ENCODE measurements at regions of chr14 and their contacts with region 1.

Region 1: GRCh38 chr14:52272375-52272774 is 4.9 kb downstream of the PTGDR start:
- DNase-seq: peak in 1 of 2 donors; percentile 73
- ATAC-seq: peak; percentile 46 to 64 (median 55)
- H3K4me3 ChIP-seq: peak overlapping the region; percentile 89
- H3K4me3 Mint-ChIP-seq: peak overlapping the region; percentile 99
- H3K27ac ChIP-seq: peak overlapping the region; percentile 71
- H3K27ac Mint-ChIP-seq: peak overlapping the region; percentile 95 to 100
- H3K4me1 ChIP-seq: peaks cover 26% of the 10 kb centered on the region
- H3K4me1 Mint-ChIP-seq: peaks cover 66 to 82% of the 10 kb centered on the region in 2 donors
- H3K27me3 ChIP-seq: no peaks in the 10 kb centered on the region
- H3K27me3 Mint-ChIP-seq: no peaks in the 10 kb centered on the region
- CTCF ChIP-seq: peak; percentile 70

Region 2: GRCh38 chr14:51989293-51990234 is 282.8 kb before region 1 on chr14 and contains the start of gene RTRAF:
- intact Hi-C with region 1: loop called (anchors 1 kb)
- DNase-seq: peak; percentile 91 to 97
- ATAC-seq: peak; percentile 97 to 98 (median 98)
- H3K4me3 ChIP-seq: peak within 1 kb of the TSS; percentile 58
- H3K4me3 Mint-ChIP-seq: peak within 1 kb of the TSS; percentile 93
- H3K27ac ChIP-seq: peak within 1 kb of the TSS; percentile 83
- H3K27ac Mint-ChIP-seq: peak within 1 kb of the TSS; percentile 90 to 91
- H3K4me1 ChIP-seq: peaks cover 7% of the 10 kb centered on the region
- H3K4me1 Mint-ChIP-seq: peaks cover 15% of the 10 kb centered on the region in 2 donors
- H3K27me3 ChIP-seq: no peaks in the 10 kb centered on the region
- H3K27me3 Mint-ChIP-seq: no peaks in the 10 kb centered on the region
- CTCF ChIP-seq: no peak
- total RNA-seq, gene RTRAF: 84.3 to 96.5 (median 92.7) TPM

Region 3: DNA sequence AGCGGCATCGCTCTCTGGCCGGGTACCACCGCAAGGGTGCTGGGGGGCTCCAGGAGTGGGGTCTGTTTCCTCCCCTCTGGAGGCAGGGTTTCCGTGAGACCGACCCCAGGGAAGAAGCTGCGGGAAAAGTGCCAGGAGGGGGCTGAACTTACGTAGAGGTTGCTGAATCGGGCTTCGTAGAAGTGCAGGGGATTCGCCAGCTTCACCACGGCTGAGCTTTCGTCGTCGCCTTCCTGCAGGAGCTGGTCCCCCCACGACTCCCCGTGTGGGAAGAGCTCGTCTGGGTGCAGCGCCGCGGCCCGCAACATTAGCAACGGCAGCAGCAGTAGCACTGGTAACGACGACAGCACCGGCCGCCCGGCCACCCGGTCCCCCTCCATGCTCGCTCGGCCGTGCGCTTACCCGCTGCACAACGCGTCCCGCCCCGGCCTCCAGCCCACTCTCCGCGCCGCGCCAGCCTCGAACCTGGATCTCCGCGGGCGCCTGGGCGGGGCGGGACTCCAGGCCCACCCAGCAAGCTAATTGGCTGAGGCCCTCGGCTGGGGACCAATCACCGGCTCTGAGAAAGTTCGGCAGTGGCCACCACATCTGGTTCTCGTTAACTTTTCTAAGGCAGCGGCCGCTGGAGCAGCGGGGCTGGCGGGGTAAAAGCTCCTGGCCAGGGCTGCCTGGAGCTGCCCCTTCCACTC is 203.6 kb before region 1 on chr14 and contains the start of gene NID2:
- intact Hi-C with region 1: loop called (anchors 2 kb)
- DNase-seq: peak; percentile 49 to 60
- ATAC-seq: peak; percentile 71 to 80 (median 78)
- H3K4me3 ChIP-seq: peak within 1 kb of the TSS; percentile 47
- H3K4me3 Mint-ChIP-seq: peak within 1 kb of the TSS; percentile 85
- H3K27ac ChIP-seq: no peak within 1 kb of the TSS
- H3K27ac Mint-ChIP-seq: no peak within 1 kb of the TSS
- H3K4me1 ChIP-seq: peaks cover 26% of the 10 kb centered on the region
- H3K4me1 Mint-ChIP-seq: peaks cover 21 to 33% of the 10 kb centered on the region in 2 donors
- H3K27me3 ChIP-seq: peaks cover 29% of the 10 kb centered on the region
- H3K27me3 Mint-ChIP-seq: peaks cover 39 to 40% of the 10 kb centered on the region in 2 donors
- CTCF ChIP-seq: no peak
- total RNA-seq, gene NID2: 0.36 to 0.80 (median 0.40) TPM

Region 4: GRCh38 chr14:52175982-52176502 is 96.3 kb before region 1 on chr14:
- intact Hi-C with region 1: loop called (anchors 1 kb)
- DNase-seq: peak; percentile 50 to 82
- ATAC-seq: peak; percentile 85 to 95 (median 95)
- H3K4me3 ChIP-seq: no peak overlapping the region
- H3K4me3 Mint-ChIP-seq: peak overlapping the region; percentile 84
- H3K27ac ChIP-seq: peak overlapping the region; percentile 83
- H3K27ac Mint-ChIP-seq: peak overlapping the region; percentile 91 to 99
- H3K4me1 ChIP-seq: peaks cover 41% of the 10 kb centered on the region
- H3K4me1 Mint-ChIP-seq: peaks cover 61 to 69% of the 10 kb centered on the region in 2 donors
- H3K27me3 ChIP-seq: no peaks in the 10 kb centered on the region
- H3K27me3 Mint-ChIP-seq: no peaks in the 10 kb centered on the region
- CTCF ChIP-seq: no peak

Region 5: DNA sequence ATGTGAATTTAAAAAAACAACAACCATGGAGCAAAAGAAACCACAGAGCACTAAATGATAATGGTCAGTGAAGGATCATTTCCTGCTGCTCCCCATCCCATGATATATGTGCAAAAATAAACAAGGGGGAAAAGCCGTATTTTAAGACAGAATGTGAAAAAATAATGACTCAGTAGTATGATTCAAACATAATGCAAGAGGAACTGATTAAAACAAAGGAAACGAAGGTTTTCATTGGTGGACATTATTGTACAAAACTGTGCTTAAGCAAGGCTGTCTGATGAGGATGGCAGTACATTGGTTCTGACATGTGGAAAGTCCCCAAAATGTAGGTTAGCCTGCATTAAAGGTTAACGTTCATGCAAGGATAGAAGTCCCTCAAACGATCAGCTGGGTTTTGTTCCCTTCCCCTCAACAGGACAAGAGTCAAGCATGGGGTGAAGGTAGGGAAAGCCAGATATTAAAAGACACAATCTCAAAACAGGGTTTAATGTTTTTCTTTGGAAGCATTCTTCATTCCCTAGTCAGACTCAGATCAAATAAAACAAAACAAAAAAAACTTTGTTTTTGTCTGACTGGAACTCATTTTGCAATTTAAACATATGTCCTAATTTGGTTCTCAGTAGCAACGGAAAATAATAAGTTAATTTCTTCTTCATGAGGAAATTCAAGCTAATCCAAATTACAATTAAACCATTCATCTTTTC is 31.1 kb before region 1 on chr14:
- intact Hi-C with region 1: no loop called
- DNase-seq: no peak
- ATAC-seq: peak in 1 of 3 donors; percentile 66
- H3K4me3 ChIP-seq: no peak overlapping the region
- H3K4me3 Mint-ChIP-seq: no peak overlapping the region
- H3K27ac ChIP-seq: no peak overlapping the region
- H3K27ac Mint-ChIP-seq: peak overlapping the region; percentile 69 to 84
- H3K4me1 ChIP-seq: peaks cover 18% of the 10 kb centered on the region
- H3K4me1 Mint-ChIP-seq: peaks cover 63 to 72% of the 10 kb centered on the region in 2 donors
- H3K27me3 ChIP-seq: no peaks in the 10 kb centered on the region
- H3K27me3 Mint-ChIP-seq: no peaks in the 10 kb centered on the region
- CTCF ChIP-seq: no peak

Region 6: DNA sequence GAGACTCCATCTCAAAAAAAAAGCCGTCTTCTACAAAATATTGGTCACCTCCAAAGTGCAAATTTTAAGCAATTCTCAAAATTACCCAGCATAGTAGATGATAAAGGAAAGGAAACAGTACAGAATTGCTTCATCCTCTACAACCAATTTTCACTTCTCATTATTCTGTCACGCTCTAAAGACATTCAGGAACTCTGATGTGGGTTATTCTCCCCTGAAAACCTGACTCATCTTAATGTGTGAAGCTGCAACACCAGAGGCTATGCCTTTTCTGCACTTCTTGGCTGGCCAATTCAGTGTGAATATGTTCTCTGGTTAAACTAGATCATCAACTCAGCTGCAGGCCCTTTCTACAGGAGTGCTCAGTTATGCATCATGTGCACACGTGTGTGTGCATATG is 52.8 kb after region 1 on chr14:
- intact Hi-C with region 1: loop called (anchors 5 kb)
- DNase-seq: peak; percentile 37 to 63
- ATAC-seq: peak; percentile 83 to 94 (median 92)
- H3K4me3 ChIP-seq: no peak overlapping the region
- H3K4me3 Mint-ChIP-seq: peak overlapping the region; percentile 88
- H3K27ac ChIP-seq: peak overlapping the region; percentile 53
- H3K27ac Mint-ChIP-seq: peak overlapping the region; percentile 83 to 95
- H3K4me1 ChIP-seq: peaks cover 47% of the 10 kb centered on the region
- H3K4me1 Mint-ChIP-seq: peaks cover 87 to 89% of the 10 kb centered on the region in 2 donors
- H3K27me3 ChIP-seq: no peaks in the 10 kb centered on the region
- H3K27me3 Mint-ChIP-seq: no peaks in the 10 kb centered on the region
- CTCF ChIP-seq: no peak

Measured in natural killer cell (primary cell).